ENCODE measurements at regions of chr4 and their contacts with region 1.

Region 1: GRCh38 chr4:87848622-87849351 is 16.0 kb downstream of the MEPE start:
- DNase-seq: peak in 6 of 9 donors; percentile 9 to 37 (median 26)
- ATAC-seq: peak; percentile 77
- H3K4me3 ChIP-seq: peak overlapping the region; percentile 26
- H3K4me3 Mint-ChIP-seq: peak overlapping the region in 8 of 10 donors; percentile 37 to 78 (median 62)
- H3K27ac ChIP-seq: no peak overlapping the region
- H3K27ac Mint-ChIP-seq: no peak overlapping the region
- H3K4me1 ChIP-seq: peaks cover 0 to 9% of the 10 kb centered on the region in 2 donors
- H3K4me1 Mint-ChIP-seq: peaks cover 10 to 21% (median 14%) of the 10 kb centered on the region in 7 donors
- H3K27me3 ChIP-seq: no peaks in the 10 kb centered on the region
- H3K27me3 Mint-ChIP-seq: peaks cover 16 to 41% (median 30%) of the 10 kb centered on the region in 5 donors

Region 2: DNA sequence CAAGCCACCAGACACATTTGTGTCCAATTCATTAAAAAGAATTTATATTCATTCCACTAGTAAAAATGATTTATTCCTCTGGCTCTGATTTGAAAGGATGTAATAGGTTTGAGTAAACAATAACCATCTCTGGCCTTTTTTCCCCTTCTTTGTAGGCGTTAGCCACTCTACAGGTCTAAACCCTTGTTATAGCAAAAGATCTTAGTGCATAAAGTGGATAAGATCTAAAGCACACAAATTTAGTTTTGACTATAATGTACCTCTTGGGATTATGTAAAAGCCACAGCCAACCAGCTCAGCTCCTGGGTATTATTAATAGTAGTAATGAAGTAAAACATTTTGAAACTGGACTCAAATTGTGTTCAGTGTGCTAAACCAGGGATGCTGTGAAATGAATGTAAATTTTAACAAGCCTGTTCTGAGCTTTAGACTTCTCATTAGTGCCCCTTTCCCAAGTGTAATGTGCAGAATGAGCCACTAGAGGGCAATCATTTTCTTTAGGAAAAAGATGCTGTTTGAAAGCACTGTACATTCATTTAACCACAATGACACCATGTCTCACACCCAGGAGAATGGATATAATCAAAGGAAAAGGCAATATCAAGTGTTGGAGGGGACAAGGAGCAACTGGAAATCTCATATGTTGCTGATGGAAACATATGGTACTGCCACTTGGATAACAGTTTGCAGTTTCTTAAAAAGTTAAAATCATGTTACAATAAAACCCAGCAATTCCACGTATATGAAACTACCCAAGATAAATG is 698.1 kb before region 1 on chr4:
- CTCF ChIA-PET with region 1: no interaction called
- POLR2A ChIA-PET with region 1: no interaction called
- intact Hi-C with region 1: loop called in 1 of 2 experiments (anchors 5 kb)
- DNase-seq: peak in 8 of 9 donors; percentile 32 to 71 (median 55)
- ATAC-seq: peak; percentile 85
- H3K4me3 ChIP-seq: no peak overlapping the region
- H3K4me3 Mint-ChIP-seq: no peak overlapping the region
- H3K27ac ChIP-seq: no peak overlapping the region
- H3K27ac Mint-ChIP-seq: no peak overlapping the region
- H3K4me1 ChIP-seq: no peaks in the 10 kb centered on the region
- H3K4me1 Mint-ChIP-seq: peaks cover 0 to 4% (median 0%) of the 10 kb centered on the region in 7 donors
- H3K27me3 ChIP-seq: no peaks in the 10 kb centered on the region
- H3K27me3 Mint-ChIP-seq: no peaks in the 10 kb centered on the region

Region 3: GRCh38 chr4:87543835-87544461 is 304.8 kb before region 1 on chr4:
- CTCF ChIA-PET with region 1: no interaction called
- POLR2A ChIA-PET with region 1: no interaction called
- intact Hi-C with region 1: loop called in 1 of 2 experiments (anchors 2 kb)
- DNase-seq: no peak
- ATAC-seq: no peak
- H3K4me3 ChIP-seq: no peak overlapping the region
- H3K4me3 Mint-ChIP-seq: no peak overlapping the region
- H3K27ac ChIP-seq: no peak overlapping the region
- H3K27ac Mint-ChIP-seq: no peak overlapping the region
- H3K4me1 ChIP-seq: no peaks in the 10 kb centered on the region
- H3K4me1 Mint-ChIP-seq: no peaks in the 10 kb centered on the region
- H3K27me3 ChIP-seq: no peaks in the 10 kb centered on the region
- H3K27me3 Mint-ChIP-seq: peaks cover 1 to 19% (median 9%) of the 10 kb centered on the region in 5 donors

Region 4: GRCh38 chr4:87973283-87974169 is 124.7 kb after region 1 on chr4:
- CTCF ChIA-PET with region 1: no interaction called
- POLR2A ChIA-PET with region 1: no interaction called
- intact Hi-C with region 1: loop called (anchors 1 kb)
- DNase-seq: peak in 3 of 9 donors; percentile 13 to 29 (median 17)
- ATAC-seq: peak; percentile 76
- H3K4me3 ChIP-seq: no peak overlapping the region
- H3K4me3 Mint-ChIP-seq: no peak overlapping the region
- H3K27ac ChIP-seq: no peak overlapping the region
- H3K27ac Mint-ChIP-seq: no peak overlapping the region
- H3K4me1 ChIP-seq: peaks cover 5 to 7% of the 10 kb centered on the region in 2 donors
- H3K4me1 Mint-ChIP-seq: peaks cover 0 to 14% (median 6%) of the 10 kb centered on the region in 7 donors
- H3K27me3 ChIP-seq: peaks cover 0 to 2% of the 10 kb centered on the region in 2 donors
- H3K27me3 Mint-ChIP-seq: peaks cover 44 to 63% (median 56%) of the 10 kb centered on the region in 5 donors

Region 5: GRCh38 chr4:88514557-88515511 is 666.0 kb after region 1 on chr4:
- CTCF ChIA-PET with region 1: no interaction called
- POLR2A ChIA-PET with region 1: no interaction called
- intact Hi-C with region 1: loop called in 1 of 2 experiments (anchors 2 kb)
- DNase-seq: no peak
- ATAC-seq: no peak
- H3K4me3 ChIP-seq: no peak overlapping the region
- H3K4me3 Mint-ChIP-seq: no peak overlapping the region
- H3K27ac ChIP-seq: no peak overlapping the region
- H3K27ac Mint-ChIP-seq: no peak overlapping the region
- H3K4me1 ChIP-seq: no peaks in the 10 kb centered on the region
- H3K4me1 Mint-ChIP-seq: no peaks in the 10 kb centered on the region
- H3K27me3 ChIP-seq: no peaks in the 10 kb centered on the region
- H3K27me3 Mint-ChIP-seq: peaks cover 0 to 8% (median 0%) of the 10 kb centered on the region in 5 donors

Measured in naive thymus-derived CD4-positive, alpha-beta T cell (primary cell).